ENCODE measurements at regions of chr6 and their contacts with region 1.

Region 1: DNA sequence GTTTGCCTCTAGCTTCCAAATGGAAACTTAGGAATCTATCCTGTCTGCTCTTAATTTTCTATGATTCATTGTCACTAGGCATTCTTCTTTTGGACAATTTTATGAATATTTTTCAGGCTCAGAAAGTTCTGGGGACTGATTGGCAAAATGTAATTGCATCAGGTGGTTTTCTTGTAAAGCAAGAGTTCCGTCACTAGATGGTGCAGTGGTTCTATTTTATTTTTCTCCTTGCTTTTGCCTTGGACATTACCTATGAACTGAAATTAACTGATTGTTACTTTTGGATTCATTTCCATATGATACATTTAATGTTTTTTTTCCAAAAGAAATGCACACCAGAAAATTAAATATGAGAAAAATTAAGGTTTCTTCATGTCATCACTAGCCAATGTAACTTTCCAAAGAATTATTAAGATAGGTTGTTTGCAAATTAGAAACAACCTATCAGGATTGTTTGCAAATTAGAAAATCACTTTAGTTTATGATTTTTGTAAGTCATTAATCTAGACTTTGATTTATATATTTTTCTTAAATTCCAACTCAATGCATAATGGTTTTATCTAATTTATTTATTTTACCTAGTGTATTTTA is 48.0 kb downstream of the TMEM170B start:
- DNase-seq: peak; percentile 55
- H3K4me3 ChIP-seq: no peak overlapping the region
- H3K27ac ChIP-seq: no peak overlapping the region
- H3K27me3 ChIP-seq: no peaks in the 10 kb centered on the region
- CTCF ChIP-seq: peak; percentile 58

Region 2: DNA sequence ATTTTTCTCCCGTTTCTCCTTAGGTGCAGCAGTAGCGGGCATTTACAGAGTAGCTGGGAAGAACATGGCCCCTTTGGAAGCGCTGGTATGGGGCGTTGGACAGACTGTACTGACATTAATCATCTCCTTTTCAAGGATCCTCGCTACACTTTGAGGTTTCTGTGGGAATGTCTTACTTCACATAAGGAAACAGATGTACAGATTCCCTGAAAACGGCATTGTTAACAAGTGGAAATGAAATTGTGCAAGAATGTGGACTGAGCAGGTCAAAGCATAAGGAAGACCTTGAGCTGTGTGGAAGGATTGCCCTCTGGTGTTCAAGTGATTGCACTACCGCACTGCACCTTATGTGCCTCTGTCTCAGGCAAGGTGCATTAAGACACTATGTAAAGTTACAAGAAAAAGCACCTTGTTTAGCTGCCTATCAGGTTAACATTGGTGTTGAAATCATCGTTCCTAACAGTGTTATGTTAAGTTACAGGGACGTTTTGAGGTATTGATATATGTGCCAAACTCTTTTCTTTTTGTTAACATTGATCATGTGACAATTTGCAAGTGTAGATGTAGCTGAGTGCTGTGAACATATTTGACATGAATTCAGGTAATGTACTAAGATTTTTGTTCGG is 10.0 kb before region 1 on chr6:
- CTCF ChIA-PET with region 1: interaction called, 18 read pairs
- POLR2A ChIA-PET with region 1: no interaction called
- DNase-seq: peak; percentile 55
- H3K4me3 ChIP-seq: no peak overlapping the region
- H3K27ac ChIP-seq: no peak overlapping the region
- H3K27me3 ChIP-seq: no peaks in the 10 kb centered on the region
- CTCF ChIP-seq: peak; percentile 98

Region 3: GRCh38 chr6:11613858-11614257 is 28.3 kb after region 1 on chr6:
- CTCF ChIA-PET with region 1: interaction called, 11 read pairs
- POLR2A ChIA-PET with region 1: interaction called, 13 read pairs
- DNase-seq: peak; percentile 93
- H3K4me3 ChIP-seq: no peak overlapping the region
- H3K27ac ChIP-seq: peak overlapping the region; percentile 96
- H3K27me3 ChIP-seq: no peaks in the 10 kb centered on the region
- CTCF ChIP-seq: no peak

Region 4: GRCh38 chr6:12233693-12234571 is 648.4 kb after region 1 on chr6:
- CTCF ChIA-PET with region 1: interaction called, 27 read pairs
- POLR2A ChIA-PET with region 1: no interaction called
- DNase-seq: peak; percentile 60
- H3K4me3 ChIP-seq: no peak overlapping the region
- H3K27ac ChIP-seq: peak overlapping the region; percentile 55
- H3K27me3 ChIP-seq: no peaks in the 10 kb centered on the region
- CTCF ChIP-seq: peak; percentile 85

Region 5: DNA sequence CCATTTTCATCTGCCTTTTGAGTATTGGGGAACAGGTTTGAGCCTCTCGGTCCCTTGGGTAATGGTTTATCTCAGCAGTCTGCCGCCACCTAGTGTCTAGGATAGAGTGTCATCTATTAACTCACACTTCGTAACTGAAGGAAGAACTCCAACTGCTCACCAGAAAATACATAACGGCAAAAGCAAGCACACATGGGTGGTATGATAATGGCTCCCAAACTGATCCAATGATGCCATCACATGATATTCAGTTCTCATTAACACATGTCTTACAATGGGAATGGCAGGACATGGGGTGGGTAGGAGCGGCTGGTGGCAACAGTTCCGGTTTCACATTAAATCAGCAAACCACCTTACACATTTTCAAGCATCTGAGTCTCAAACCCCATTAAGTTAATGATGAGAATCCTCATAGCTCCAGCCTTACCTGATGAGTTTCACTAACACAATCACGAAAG is 1020.4 kb after region 1 on chr6:
- CTCF ChIA-PET with region 1: interaction called, 12 read pairs
- POLR2A ChIA-PET with region 1: no interaction called
- DNase-seq: peak; percentile 36
- H3K4me3 ChIP-seq: no peak overlapping the region
- H3K27ac ChIP-seq: no peak overlapping the region
- H3K27me3 ChIP-seq: no peaks in the 10 kb centered on the region
- CTCF ChIP-seq: peak; percentile 82

Measured in AG04450 (cell line).